ENCODE measurements at regions of chr4 and their contacts with region 1.

Region 1: DNA sequence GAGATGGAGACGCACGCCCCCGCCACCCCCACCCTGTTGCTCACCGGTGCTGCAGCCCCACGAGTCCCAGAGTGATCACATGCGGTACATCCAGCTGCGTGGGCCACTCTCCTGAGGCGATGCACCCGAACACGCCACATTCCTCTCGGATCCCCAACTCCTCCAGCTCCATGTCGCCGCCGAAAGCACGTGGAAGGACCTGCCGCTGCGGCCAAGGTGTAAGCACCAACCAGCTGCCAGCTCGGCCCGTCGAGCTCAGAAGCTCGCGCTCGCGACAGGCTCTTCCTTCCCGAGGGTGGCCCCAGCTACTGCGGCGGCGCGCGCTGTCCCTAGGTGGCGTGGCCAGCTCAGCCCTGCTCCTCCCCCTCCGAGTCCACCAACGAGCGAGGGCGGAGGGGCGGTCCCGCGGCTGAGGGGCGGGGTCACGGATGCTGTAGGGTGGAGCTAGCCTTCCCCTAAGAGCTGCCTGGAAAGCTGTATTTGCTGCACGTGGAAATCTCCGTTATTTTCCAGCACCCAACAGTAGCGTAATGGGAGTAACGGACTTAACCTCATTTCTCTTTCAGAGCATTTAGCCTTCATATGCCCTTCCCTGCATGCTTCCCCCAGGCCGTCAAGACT is at the start of gene PPAT:
- DNase-seq: peak; percentile 97 to 99 (median 99)
- ATAC-seq: peak; percentile 84
- H3K4me3 ChIP-seq: peak within 1 kb of the TSS; percentile 83 to 95
- H3K4me3 Mint-ChIP-seq: peak within 1 kb of the TSS; percentile 95
- H3K27ac ChIP-seq: peak within 1 kb of the TSS; percentile 73 to 93
- H3K27ac Mint-ChIP-seq: peak within 1 kb of the TSS; percentile 97
- H3K4me1 ChIP-seq: peaks cover 28% of the 10 kb centered on the region
- H3K4me1 Mint-ChIP-seq: peaks cover 58% of the 10 kb centered on the region
- H3K27me3 ChIP-seq: no peaks in the 10 kb centered on the region
- H3K27me3 Mint-ChIP-seq: no peaks in the 10 kb centered on the region
- CTCF ChIP-seq: no peak
- total RNA-seq, gene PPAT: 6.9 to 7.0 TPM

Region 2: DNA sequence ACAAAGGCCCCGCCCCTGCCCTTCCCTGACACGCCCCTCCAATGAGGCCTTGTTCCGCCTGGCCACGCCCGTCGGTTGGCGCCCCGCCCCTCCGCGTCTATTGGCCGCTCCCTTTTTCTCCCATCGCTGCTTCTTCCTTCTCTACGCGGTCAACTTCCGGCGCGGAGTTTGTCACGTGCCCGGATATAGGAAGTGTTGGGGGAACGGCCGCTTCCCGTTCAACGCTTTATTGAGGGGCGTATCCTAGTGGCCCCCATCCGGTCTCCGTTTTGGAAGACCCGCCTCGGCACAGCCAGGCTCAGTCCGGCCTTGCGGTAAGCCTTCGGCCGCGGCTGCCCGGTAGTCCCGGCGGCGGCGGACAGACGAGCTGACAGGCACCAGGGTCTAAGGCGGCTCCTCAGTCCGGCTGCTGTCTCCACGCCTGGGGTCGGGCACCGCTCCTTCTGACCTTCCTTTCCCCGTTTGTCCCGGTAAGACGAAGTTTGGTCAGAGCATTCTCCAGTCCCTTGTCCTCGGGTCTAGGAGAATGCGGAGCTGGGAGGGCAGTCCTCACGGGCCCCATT is 581.9 kb before region 1 on chr4 and contains the start of gene EXOC1:
- CTCF ChIA-PET with region 1: no interaction called
- POLR2A ChIA-PET with region 1: no interaction called
- intact Hi-C with region 1: loop called in 1 of 2 experiments (anchors 2 kb)
- DNase-seq: peak; percentile 90 to 98 (median 97)
- ATAC-seq: peak; percentile 96
- H3K4me3 ChIP-seq: peak within 1 kb of the TSS; percentile 96
- H3K4me3 Mint-ChIP-seq: peak within 1 kb of the TSS; percentile 36
- H3K27ac ChIP-seq: peak within 1 kb of the TSS; percentile 70 to 86
- H3K27ac Mint-ChIP-seq: peak within 1 kb of the TSS; percentile 64
- H3K4me1 ChIP-seq: peaks cover 40% of the 10 kb centered on the region
- H3K4me1 Mint-ChIP-seq: peaks cover 38% of the 10 kb centered on the region
- H3K27me3 ChIP-seq: no peaks in the 10 kb centered on the region
- H3K27me3 Mint-ChIP-seq: no peaks in the 10 kb centered on the region
- CTCF ChIP-seq: no peak
- total RNA-seq, gene EXOC1: 12.1 to 14.5 TPM

Region 3: GRCh38 chr4:56467284-56468096 is 32.1 kb after region 1 on chr4 and contains the start of gene SRP72:
- CTCF ChIA-PET with region 1: interaction called, 4 read pairs
- POLR2A ChIA-PET with region 1: interaction called, 30 read pairs
- intact Hi-C with region 1: loop called (anchors 1 kb)
- DNase-seq: peak; percentile 81 to 95 (median 90)
- ATAC-seq: peak; percentile 96
- H3K4me3 ChIP-seq: peak within 1 kb of the TSS; percentile 63 to 98
- H3K4me3 Mint-ChIP-seq: peak within 1 kb of the TSS; percentile 100
- H3K27ac ChIP-seq: peak within 1 kb of the TSS; percentile 69 to 92
- H3K27ac Mint-ChIP-seq: peak within 1 kb of the TSS; percentile 100
- H3K4me1 ChIP-seq: peaks cover 44% of the 10 kb centered on the region
- H3K4me1 Mint-ChIP-seq: peaks cover 60% of the 10 kb centered on the region
- H3K27me3 ChIP-seq: no peaks in the 10 kb centered on the region
- H3K27me3 Mint-ChIP-seq: no peaks in the 10 kb centered on the region
- CTCF ChIP-seq: no peak
- total RNA-seq, gene SRP72: 142 to 148 TPM

Region 4: DNA sequence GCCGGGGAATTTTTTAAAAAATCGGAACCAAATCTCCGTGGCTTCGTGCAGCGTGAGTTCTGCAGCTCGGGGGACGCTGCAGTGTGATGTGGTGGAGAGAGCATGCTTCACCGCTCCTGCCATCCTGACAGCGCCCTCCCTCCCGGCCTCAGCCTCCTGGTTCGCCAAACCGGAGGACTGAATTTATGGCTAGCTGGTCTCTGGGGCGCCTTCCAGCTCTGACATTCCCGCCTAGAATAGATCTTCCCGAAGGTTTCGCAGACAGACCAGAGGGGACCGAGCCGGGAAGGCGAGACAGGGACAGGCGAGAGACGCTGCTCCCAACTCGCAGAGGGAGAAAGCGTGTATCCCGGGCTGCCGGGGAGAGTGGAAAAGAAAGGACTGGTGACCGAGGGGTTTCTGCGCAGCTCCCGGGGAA is 219.8 kb after region 1 on chr4:
- CTCF ChIA-PET with region 1: no interaction called
- POLR2A ChIA-PET with region 1: no interaction called
- intact Hi-C with region 1: loop called in 1 of 2 experiments (anchors 10 kb)
- DNase-seq: peak in 5 of 9 experiments; percentile 17 to 62 (median 43)
- ATAC-seq: no peak
- H3K4me3 ChIP-seq: peak overlapping the region; percentile 61 to 78
- H3K4me3 Mint-ChIP-seq: peak overlapping the region; percentile 90
- H3K27ac ChIP-seq: peak overlapping the region in 1 of 2 experiments; percentile 73
- H3K27ac Mint-ChIP-seq: peak overlapping the region; percentile 41
- H3K4me1 ChIP-seq: peaks cover 28% of the 10 kb centered on the region
- H3K4me1 Mint-ChIP-seq: peaks cover 56% of the 10 kb centered on the region
- H3K27me3 ChIP-seq: no peaks in the 10 kb centered on the region
- H3K27me3 Mint-ChIP-seq: peaks cover 10% of the 10 kb centered on the region
- CTCF ChIP-seq: no peak

Region 5: GRCh38 chr4:56907489-56908205 is 472.2 kb after region 1 on chr4 and contains the start of gene REST:
- CTCF ChIA-PET with region 1: no interaction called
- POLR2A ChIA-PET with region 1: interaction called, 39 read pairs
- intact Hi-C with region 1: loop called (anchors 1 kb)
- DNase-seq: peak; percentile 74 to 91 (median 84)
- ATAC-seq: peak; percentile 67
- H3K4me3 ChIP-seq: peak within 1 kb of the TSS; percentile 64 to 92
- H3K4me3 Mint-ChIP-seq: peak within 1 kb of the TSS; percentile 97
- H3K27ac ChIP-seq: peak within 1 kb of the TSS; percentile 57 to 86
- H3K27ac Mint-ChIP-seq: peak within 1 kb of the TSS; percentile 95
- H3K4me1 ChIP-seq: peaks cover 43% of the 10 kb centered on the region
- H3K4me1 Mint-ChIP-seq: peaks cover 42% of the 10 kb centered on the region
- H3K27me3 ChIP-seq: no peaks in the 10 kb centered on the region
- H3K27me3 Mint-ChIP-seq: no peaks in the 10 kb centered on the region
- CTCF ChIP-seq: no peak
- total RNA-seq, gene REST: 58.9 to 60.7 TPM